ENCODE measurements at regions of chr12 and their contacts with region 1.

Region 1: GRCh38 chr12:107131832-107132616 is 38.7 kb upstream of the CRY1 start:
- DNase-seq: no peak
- H3K4me3 Mint-ChIP-seq: no peak overlapping the region
- H3K27ac Mint-ChIP-seq: no peak overlapping the region
- H3K4me1 Mint-ChIP-seq: peaks cover 2% of the 10 kb centered on the region
- H3K27me3 Mint-ChIP-seq: no peaks in the 10 kb centered on the region

Region 2: GRCh38 chr12:106962286-106962685 is 169.7 kb before region 1 on chr12:
- intact Hi-C with region 1: no loop called
- DNase-seq: no peak
- H3K4me3 Mint-ChIP-seq: no peak overlapping the region
- H3K27ac Mint-ChIP-seq: no peak overlapping the region
- H3K4me1 Mint-ChIP-seq: peaks cover 19% of the 10 kb centered on the region
- H3K27me3 Mint-ChIP-seq: no peaks in the 10 kb centered on the region

Region 3: GRCh38 chr12:107115119-107115518 is 16.9 kb before region 1 on chr12:
- intact Hi-C with region 1: no loop called
- DNase-seq: no peak
- H3K4me3 Mint-ChIP-seq: no peak overlapping the region
- H3K27ac Mint-ChIP-seq: no peak overlapping the region
- H3K4me1 Mint-ChIP-seq: no peaks in the 10 kb centered on the region
- H3K27me3 Mint-ChIP-seq: peaks cover 31% of the 10 kb centered on the region

Region 4: GRCh38 chr12:107607464-107608392 is 475.7 kb after region 1 on chr12:
- intact Hi-C with region 1: loop called (anchors 1 kb)
- DNase-seq: peak; percentile 62
- H3K4me3 Mint-ChIP-seq: no peak overlapping the region
- H3K27ac Mint-ChIP-seq: no peak overlapping the region
- H3K4me1 Mint-ChIP-seq: no peaks in the 10 kb centered on the region
- H3K27me3 Mint-ChIP-seq: no peaks in the 10 kb centered on the region